AG04450 (cell line): ENCODE measurements at regions of chr20 and their contacts with region 1.

Region 1: DNA sequence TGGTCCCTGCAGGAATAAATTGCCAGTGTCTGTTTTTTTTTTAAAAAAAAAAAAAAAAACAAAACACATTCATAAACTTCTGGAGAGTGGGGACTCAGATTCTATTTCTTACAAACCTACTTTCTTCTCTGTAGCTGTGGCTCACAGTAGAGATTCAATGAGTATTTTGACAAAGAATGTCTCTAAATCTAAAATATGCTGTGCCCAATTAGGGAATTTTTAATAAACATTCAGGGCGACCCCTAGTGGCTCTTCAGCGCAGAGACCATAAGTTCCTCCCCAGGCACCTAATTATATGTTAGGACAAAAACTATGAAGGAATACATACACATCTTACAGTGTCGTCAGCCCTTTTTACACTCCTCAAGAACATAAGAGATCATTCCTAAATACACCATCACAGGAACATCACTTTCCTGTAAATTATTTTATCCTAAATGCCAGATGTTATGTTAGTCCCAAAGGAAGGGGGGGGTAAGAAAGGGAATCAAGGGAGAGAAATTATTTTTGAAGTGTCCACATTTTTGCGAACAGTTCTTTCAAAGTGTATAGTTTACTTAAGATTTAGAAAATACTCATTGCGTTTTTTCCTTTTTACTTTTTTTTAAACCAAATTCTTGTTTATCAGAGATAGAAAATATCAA is 21.8 kb upstream of the NAA20 start:
- DNase-seq: no peak
- H3K4me3 ChIP-seq: no peak overlapping the region
- H3K27ac ChIP-seq: no peak overlapping the region
- H3K27me3 ChIP-seq: no peaks in the 10 kb centered on the region
- CTCF ChIP-seq: peak; percentile 78

Region 2: GRCh38 chr20:19692685-19693119 is 302.6 kb before region 1 on chr20:
- CTCF ChIA-PET with region 1: interaction called, 22 read pairs
- POLR2A ChIA-PET with region 1: no interaction called
- DNase-seq: no peak
- H3K4me3 ChIP-seq: no peak overlapping the region
- H3K27ac ChIP-seq: no peak overlapping the region
- H3K27me3 ChIP-seq: no peaks in the 10 kb centered on the region
- CTCF ChIP-seq: peak; percentile 87

Region 3: DNA sequence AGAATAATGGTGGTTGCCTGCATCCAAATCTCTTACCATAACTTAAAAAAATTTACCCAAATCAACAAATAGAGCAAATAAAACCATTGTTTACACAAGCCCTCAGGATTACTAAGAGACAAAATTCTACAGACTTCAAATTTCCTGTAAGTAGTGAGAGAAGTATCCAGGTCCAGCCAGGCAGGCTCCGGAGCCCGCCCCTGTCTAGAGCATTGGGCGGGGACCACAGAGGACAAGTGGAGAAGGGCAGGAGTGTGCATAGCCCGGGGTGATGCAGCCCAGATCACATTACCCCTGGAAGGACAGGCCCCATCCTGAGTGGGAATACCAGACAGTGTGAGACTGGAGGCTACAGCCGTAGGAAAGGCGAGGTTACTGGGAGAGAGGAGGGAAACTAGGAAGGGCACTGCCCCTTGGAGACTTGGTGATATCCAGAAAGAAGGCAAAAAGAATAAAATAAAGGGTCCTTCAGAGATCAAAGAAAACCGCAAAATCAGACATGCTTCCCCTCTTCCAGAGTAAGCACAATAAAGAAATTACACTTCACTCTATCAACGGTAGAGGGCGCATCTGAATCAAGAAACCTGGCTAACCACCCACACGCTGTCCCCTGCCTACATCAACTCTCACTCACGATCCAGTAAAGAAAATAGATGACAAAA is 210.7 kb before region 1 on chr20:
- CTCF ChIA-PET with region 1: interaction called, 27 read pairs
- POLR2A ChIA-PET with region 1: interaction called, 9 read pairs
- DNase-seq: peak; percentile 76
- H3K4me3 ChIP-seq: peak overlapping the region; percentile 34
- H3K27ac ChIP-seq: peak overlapping the region; percentile 93
- H3K27me3 ChIP-seq: no peaks in the 10 kb centered on the region
- CTCF ChIP-seq: peak; percentile 77

Region 4: GRCh38 chr20:19880256-19881079 is 114.9 kb before region 1 on chr20:
- CTCF ChIA-PET with region 1: interaction called, 4 read pairs
- POLR2A ChIA-PET with region 1: interaction called, 11 read pairs
- DNase-seq: peak; percentile 43
- H3K4me3 ChIP-seq: 0 out of 2 replicates have a peak overlapping the region, but pooled peaks have one; percentile 25
- H3K27ac ChIP-seq: peak overlapping the region; percentile 89
- H3K27me3 ChIP-seq: no peaks in the 10 kb centered on the region
- CTCF ChIP-seq: no peak

Region 5: GRCh38 chr20:19921284-19921793 is 74.0 kb before region 1 on chr20:
- CTCF ChIA-PET with region 1: no interaction called
- POLR2A ChIA-PET with region 1: no interaction called
- DNase-seq: no peak
- H3K4me3 ChIP-seq: no peak overlapping the region
- H3K27ac ChIP-seq: no peak overlapping the region
- H3K27me3 ChIP-seq: no peaks in the 10 kb centered on the region
- CTCF ChIP-seq: no peak

Region 6: DNA sequence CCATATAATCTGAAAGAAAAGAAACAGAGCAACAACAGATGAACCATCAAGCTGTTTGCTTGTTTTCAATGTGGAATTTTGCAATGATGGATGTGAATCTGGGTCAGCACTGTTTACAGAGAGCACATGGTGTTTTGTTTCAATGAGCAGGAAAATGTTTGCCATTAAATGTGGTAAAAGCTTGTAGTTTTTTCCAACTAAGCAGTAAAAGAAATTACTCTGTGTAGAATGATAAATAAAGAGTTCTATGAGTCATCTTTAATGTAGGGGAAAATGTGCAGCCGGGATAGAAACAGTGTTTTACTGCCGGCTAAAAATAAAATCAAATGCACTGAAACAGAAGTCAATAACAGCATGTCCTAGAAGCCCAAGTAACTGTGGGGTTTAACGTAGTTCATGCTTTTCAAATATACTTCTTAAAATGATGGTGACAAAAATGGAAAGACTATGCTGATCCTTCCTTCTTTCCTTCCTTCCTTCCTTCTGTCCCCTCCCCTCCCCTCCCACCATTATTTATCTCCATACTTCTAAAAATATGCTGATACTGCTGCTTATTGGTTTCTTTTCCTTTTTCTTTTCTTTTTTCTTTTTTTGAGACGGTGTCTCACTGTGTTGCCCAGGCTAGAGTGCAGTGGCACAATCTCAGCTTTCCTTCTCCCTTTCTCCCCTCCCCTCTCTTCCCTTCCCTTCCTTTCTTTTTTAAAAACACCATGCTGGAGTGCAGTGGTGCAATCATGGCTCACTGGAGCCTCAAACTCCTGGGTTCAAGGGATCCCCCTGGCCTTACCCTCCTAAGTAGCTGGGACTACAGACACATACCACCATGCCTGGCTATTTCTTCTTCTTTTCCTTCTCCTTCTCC is 15.5 kb after region 1 on chr20:
- CTCF ChIA-PET with region 1: interaction called, 8 read pairs
- POLR2A ChIA-PET with region 1: interaction called, 12 read pairs
- DNase-seq: peak; percentile 56
- H3K4me3 ChIP-seq: peak overlapping the region; percentile 31
- H3K27ac ChIP-seq: no peak overlapping the region
- H3K27me3 ChIP-seq: no peaks in the 10 kb centered on the region
- CTCF ChIP-seq: no peak